ENCODE measurements at regions of chr1 and their contacts with region 1.

Region 1: GRCh38 chr1:210311726-210312493 is 16.8 kb upstream of the HHAT start:
- DNase-seq: no peak
- H3K4me3 ChIP-seq: peak overlapping the region; percentile 50 to 73; a peak in 2 of 4 replicates
- H3K27ac ChIP-seq: no peak overlapping the region
- H3K4me1 ChIP-seq: peaks cover 3 to 4% of the 10 kb centered on the region in 2 experiments; a peak in 2 of 4 replicates
- H3K27me3 ChIP-seq: no peaks in the 10 kb centered on the region
- CTCF ChIP-seq: no peak
- EP300 ChIP-seq: no peak
- RAD21 ChIP-seq: no peak

Region 2: GRCh38 chr1:209860293-209860881 is 451.5 kb before region 1 on chr1:
- CTCF ChIA-PET with region 1: interaction called, 13 read pairs
- POLR2A ChIA-PET with region 1: no interaction called
- DNase-seq: peak; percentile 89
- H3K4me3 ChIP-seq: peak overlapping the region in 1 of 2 experiments; percentile 53; a peak in 1 of 4 replicates
- H3K27ac ChIP-seq: peak overlapping the region in 1 of 2 experiments; percentile 4; a peak in 1 of 4 replicates
- H3K4me1 ChIP-seq: peaks cover 12 to 14% of the 10 kb centered on the region in 2 experiments; a peak in 3 of 4 replicates
- H3K27me3 ChIP-seq: no peaks in the 10 kb centered on the region
- CTCF ChIP-seq: peak; percentile 94
- EP300 ChIP-seq: no peak
- RAD21 ChIP-seq: peak; percentile 93

Region 3: GRCh38 chr1:210200124-210200736 is 111.7 kb before region 1 on chr1:
- CTCF ChIA-PET with region 1: interaction called, 10 read pairs
- POLR2A ChIA-PET with region 1: no interaction called
- DNase-seq: no peak
- H3K4me3 ChIP-seq: no peak overlapping the region
- H3K27ac ChIP-seq: no peak overlapping the region
- H3K4me1 ChIP-seq: no peaks in the 10 kb centered on the region; a peak in 1 of 4 replicates
- H3K27me3 ChIP-seq: no peaks in the 10 kb centered on the region
- CTCF ChIP-seq: no peak
- EP300 ChIP-seq: no peak
- RAD21 ChIP-seq: peak; percentile 52; the same call in 1 of the 2 replicates

Region 4: GRCh38 chr1:210239349-210240111 is 72.4 kb before region 1 on chr1:
- CTCF ChIA-PET with region 1: interaction called, 22 read pairs
- POLR2A ChIA-PET with region 1: no interaction called
- DNase-seq: peak; percentile 62
- H3K4me3 ChIP-seq: peak overlapping the region in 1 of 2 experiments; percentile 17; a peak in 1 of 4 replicates
- H3K27ac ChIP-seq: peak overlapping the region; percentile 64 to 71; a peak in 3 of 4 replicates
- H3K4me1 ChIP-seq: peaks cover 29 to 42% of the 10 kb centered on the region in 2 experiments
- H3K27me3 ChIP-seq: no peaks in the 10 kb centered on the region
- CTCF ChIP-seq: peak; percentile 66
- EP300 ChIP-seq: peak in 1 of 2 experiments; percentile 73; a peak in 1 of 4 replicates
- RAD21 ChIP-seq: peak; percentile 68

Region 5: GRCh38 chr1:210280221-210280620 is 31.7 kb before region 1 on chr1:
- CTCF ChIA-PET with region 1: no interaction called
- POLR2A ChIA-PET with region 1: no interaction called
- DNase-seq: no peak
- H3K4me3 ChIP-seq: no peak overlapping the region
- H3K27ac ChIP-seq: no peak overlapping the region
- H3K4me1 ChIP-seq: no peaks in the 10 kb centered on the region
- H3K27me3 ChIP-seq: no peaks in the 10 kb centered on the region; the same call in 1 of the 2 replicates
- CTCF ChIP-seq: no peak
- EP300 ChIP-seq: no peak
- RAD21 ChIP-seq: no peak

Region 6: DNA sequence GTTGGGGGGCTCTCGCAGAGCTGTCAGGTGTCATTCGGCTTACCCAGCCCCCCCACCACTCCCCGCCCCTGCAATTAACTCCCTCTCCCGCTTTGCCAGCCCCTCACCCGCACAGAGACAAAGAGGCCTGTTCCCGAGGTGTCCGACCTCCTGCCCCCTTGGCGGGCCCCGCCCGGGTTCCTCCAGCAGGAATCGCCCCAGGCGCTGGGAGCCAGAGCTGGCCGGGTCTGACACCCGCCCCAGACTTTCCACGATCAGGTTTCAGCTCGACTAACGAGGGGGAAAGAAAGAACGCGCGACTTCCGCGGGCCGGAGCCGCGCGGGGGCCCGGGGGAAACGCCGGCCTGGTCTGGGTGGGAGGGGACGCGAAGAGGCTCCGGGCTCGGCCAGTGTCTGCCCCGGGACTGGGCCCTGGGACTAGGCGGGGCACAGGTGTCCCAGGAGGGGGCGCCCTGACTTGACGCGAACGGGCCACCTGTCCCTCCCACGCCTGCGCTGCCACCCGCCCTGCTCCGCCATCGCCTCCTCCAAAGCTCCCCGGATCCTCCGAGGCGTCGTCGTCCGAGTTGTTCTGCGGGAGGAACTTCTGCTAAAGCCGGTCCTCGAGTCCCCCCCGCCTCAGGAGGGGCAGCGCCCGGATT is 19.6 kb before region 1 on chr1:
- CTCF ChIA-PET with region 1: interaction called, 29 read pairs
- POLR2A ChIA-PET with region 1: interaction called, 3 read pairs
- DNase-seq: peak; percentile 80
- H3K4me3 ChIP-seq: peak overlapping the region; percentile 45 to 55
- H3K27ac ChIP-seq: peak overlapping the region; percentile 55 to 98; a peak in 3 of 4 replicates
- H3K4me1 ChIP-seq: peaks cover 23 to 43% of the 10 kb centered on the region in 2 experiments
- H3K27me3 ChIP-seq: no peaks in the 10 kb centered on the region
- CTCF ChIP-seq: peak; percentile 48
- EP300 ChIP-seq: no peak
- RAD21 ChIP-seq: no peak

Region 7: GRCh38 chr1:210323957-210324356 is 12.0 kb after region 1 on chr1:
- CTCF ChIA-PET with region 1: interaction called, 10 read pairs
- POLR2A ChIA-PET with region 1: interaction called, 4 read pairs
- DNase-seq: no peak
- H3K4me3 ChIP-seq: no peak overlapping the region
- H3K27ac ChIP-seq: no peak overlapping the region
- H3K4me1 ChIP-seq: peaks cover 5 to 8% of the 10 kb centered on the region in 2 experiments
- H3K27me3 ChIP-seq: no peaks in the 10 kb centered on the region
- CTCF ChIP-seq: no peak
- EP300 ChIP-seq: no peak
- RAD21 ChIP-seq: no peak